CD4-positive, alpha-beta T cell (primary cell): ENCODE measurements at regions of chr16 and their contacts with region 1.

Region 1: DNA sequence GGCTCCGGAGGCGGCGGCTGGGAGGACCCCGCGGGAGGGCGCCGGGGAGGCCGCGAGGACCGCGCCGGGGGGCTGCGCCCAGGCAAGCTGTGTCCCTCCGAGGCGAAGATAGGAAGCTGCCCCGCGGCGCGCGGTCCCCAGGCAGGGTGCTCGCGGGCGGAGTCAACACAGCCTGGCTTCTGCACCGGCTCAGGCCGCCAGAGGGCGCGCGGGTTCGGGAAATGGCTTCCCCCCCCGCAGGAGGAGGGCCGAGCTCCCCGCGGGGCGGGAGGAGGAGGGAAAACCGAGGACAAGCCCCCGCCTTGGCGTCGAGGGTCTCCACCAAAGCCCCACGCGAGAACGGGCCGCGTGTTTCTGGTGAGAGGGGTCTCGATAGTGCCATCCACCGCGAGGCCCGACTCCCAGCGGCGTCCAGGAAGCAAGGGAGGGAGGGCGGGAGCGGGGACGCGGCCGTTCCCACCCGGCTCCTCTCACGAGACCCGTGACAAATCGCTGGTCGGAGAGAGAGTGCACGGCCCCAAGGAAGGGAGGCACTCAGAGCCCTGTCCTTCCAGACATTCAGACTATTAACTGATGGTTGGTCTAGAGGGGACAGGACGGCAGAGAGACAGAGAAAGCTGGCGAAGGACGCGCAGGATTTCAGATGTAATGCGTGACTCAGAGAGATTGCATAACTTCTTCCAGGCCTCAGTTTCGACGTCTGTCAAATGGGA is 64.4 kb upstream of the DNAJA2 start:
- DNase-seq: peak; percentile 76 to 94 (median 88)
- ATAC-seq: peak; percentile 97
- H3K4me3 ChIP-seq: peak overlapping the region; percentile 74
- H3K4me3 Mint-ChIP-seq: peak overlapping the region; percentile 67
- H3K27ac ChIP-seq: no peak overlapping the region
- H3K27ac Mint-ChIP-seq: no peak overlapping the region
- H3K4me1 ChIP-seq: peaks cover 13% of the 10 kb centered on the region
- H3K4me1 Mint-ChIP-seq: no peaks in the 10 kb centered on the region
- H3K27me3 ChIP-seq: no peaks in the 10 kb centered on the region
- H3K27me3 Mint-ChIP-seq: no peaks in the 10 kb centered on the region
- CTCF ChIP-seq: peak; percentile 93

Region 2: GRCh38 chr16:46689365-46690280 is 348.3 kb before region 1 on chr16 and contains the start of gene ORC6:
- CTCF ChIA-PET with region 1: no interaction called
- POLR2A ChIA-PET with region 1: no interaction called
- intact Hi-C with region 1: loop called in 1 of 2 experiments (anchors 5 kb)
- DNase-seq: peak; percentile 92 to 97 (median 96)
- ATAC-seq: peak; percentile 72
- H3K4me3 ChIP-seq: peak within 1 kb of the TSS; percentile 94
- H3K4me3 Mint-ChIP-seq: no peak within 1 kb of the TSS
- H3K27ac ChIP-seq: peak within 1 kb of the TSS; percentile 91 to 98
- H3K27ac Mint-ChIP-seq: no peak within 1 kb of the TSS
- H3K4me1 ChIP-seq: peaks cover 23% of the 10 kb centered on the region
- H3K4me1 Mint-ChIP-seq: peaks cover 33% of the 10 kb centered on the region
- H3K27me3 ChIP-seq: no peaks in the 10 kb centered on the region
- H3K27me3 Mint-ChIP-seq: no peaks in the 10 kb centered on the region
- CTCF ChIP-seq: no peak
- total RNA-seq, gene ORC6: 3.7 to 3.8 TPM

Region 3: DNA sequence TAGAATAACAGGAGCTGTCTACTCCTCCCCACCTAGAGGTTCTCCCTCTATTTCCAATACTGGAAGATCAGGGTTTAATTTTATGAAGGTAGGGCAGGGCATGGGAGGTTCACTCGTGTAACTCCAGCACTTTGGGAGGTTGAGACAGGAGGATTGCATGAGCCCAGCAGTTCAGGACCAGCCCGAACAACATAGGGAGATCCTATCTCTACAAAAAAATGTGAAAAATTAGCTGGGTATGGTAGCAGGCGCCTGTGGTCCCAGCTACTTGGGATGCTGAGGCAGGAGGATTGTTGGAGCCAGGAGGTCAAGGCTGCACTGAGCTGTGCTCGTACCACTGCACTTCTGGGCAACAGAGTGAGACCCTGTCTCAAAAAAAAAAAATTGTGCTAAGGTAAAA is 14.0 kb before region 1 on chr16:
- CTCF ChIA-PET with region 1: interaction called, 15 read pairs
- POLR2A ChIA-PET with region 1: no interaction called
- intact Hi-C with region 1: no loop called
- DNase-seq: no peak
- ATAC-seq: no peak
- H3K4me3 ChIP-seq: no peak overlapping the region
- H3K4me3 Mint-ChIP-seq: no peak overlapping the region
- H3K27ac ChIP-seq: no peak overlapping the region
- H3K27ac Mint-ChIP-seq: no peak overlapping the region
- H3K4me1 ChIP-seq: no peaks in the 10 kb centered on the region
- H3K4me1 Mint-ChIP-seq: no peaks in the 10 kb centered on the region
- H3K27me3 ChIP-seq: no peaks in the 10 kb centered on the region
- H3K27me3 Mint-ChIP-seq: no peaks in the 10 kb centered on the region
- CTCF ChIP-seq: no peak

Region 4: GRCh38 chr16:47460711-47461597 is 423.1 kb after region 1 on chr16 and contains the starts of genes ITFG1 and PHKB:
- CTCF ChIA-PET with region 1: interaction called, 6 read pairs
- POLR2A ChIA-PET with region 1: interaction called, 3 read pairs
- intact Hi-C with region 1: loop called in 1 of 2 experiments (anchors 5 kb)
- DNase-seq: peak; percentile 89 to 98 (median 94)
- ATAC-seq: peak; percentile 96
- H3K4me3 ChIP-seq: peak within 1 kb of the TSS; percentile 79
- H3K4me3 Mint-ChIP-seq: peak within 1 kb of the TSS; percentile 89
- H3K27ac ChIP-seq: peak within 1 kb of the TSS; percentile 87 to 93
- H3K27ac Mint-ChIP-seq: peak within 1 kb of the TSS; percentile 87
- H3K4me1 ChIP-seq: peaks cover 26% of the 10 kb centered on the region
- H3K4me1 Mint-ChIP-seq: peaks cover 70% of the 10 kb centered on the region
- H3K27me3 ChIP-seq: no peaks in the 10 kb centered on the region
- H3K27me3 Mint-ChIP-seq: no peaks in the 10 kb centered on the region
- CTCF ChIP-seq: no peak
- total RNA-seq, gene ITFG1: 18.0 to 18.5 TPM
- total RNA-seq, gene PHKB: 28.8 to 31.3 TPM

Region 5: DNA sequence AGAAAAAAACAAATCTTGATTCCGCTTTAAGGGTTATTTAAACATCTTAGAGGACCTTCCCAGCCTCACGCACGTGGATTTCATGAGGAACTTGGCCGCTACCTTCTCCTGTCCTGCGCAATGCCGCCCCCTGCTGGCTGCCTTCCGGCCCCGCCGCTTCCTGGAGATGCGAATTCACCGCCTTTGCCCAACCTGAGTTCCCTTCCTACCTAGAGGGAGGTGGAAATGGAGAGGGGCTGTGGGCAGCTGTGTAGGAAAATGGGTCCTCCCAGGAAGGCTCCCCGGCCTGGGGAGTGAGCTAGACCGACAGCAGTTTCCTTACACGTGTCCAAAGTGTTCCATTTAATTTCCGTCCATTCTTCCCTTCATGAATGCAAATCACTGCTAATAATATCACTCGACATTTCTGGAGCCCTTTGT is 1118.9 kb after region 1 on chr16:
- CTCF ChIA-PET with region 1: no interaction called
- POLR2A ChIA-PET with region 1: no interaction called
- intact Hi-C with region 1: loop called (anchors 2 kb)
- DNase-seq: peak; percentile 62 to 86 (median 76)
- ATAC-seq: peak; percentile 74
- H3K4me3 ChIP-seq: no peak overlapping the region
- H3K4me3 Mint-ChIP-seq: no peak overlapping the region
- H3K27ac ChIP-seq: no peak overlapping the region
- H3K27ac Mint-ChIP-seq: no peak overlapping the region
- H3K4me1 ChIP-seq: peaks cover 7% of the 10 kb centered on the region
- H3K4me1 Mint-ChIP-seq: no peaks in the 10 kb centered on the region
- H3K27me3 ChIP-seq: peaks cover 0 to 3% of the 10 kb centered on the region in 2 experiments
- H3K27me3 Mint-ChIP-seq: peaks cover 14% of the 10 kb centered on the region
- CTCF ChIP-seq: peak; percentile 94

Region 6: DNA sequence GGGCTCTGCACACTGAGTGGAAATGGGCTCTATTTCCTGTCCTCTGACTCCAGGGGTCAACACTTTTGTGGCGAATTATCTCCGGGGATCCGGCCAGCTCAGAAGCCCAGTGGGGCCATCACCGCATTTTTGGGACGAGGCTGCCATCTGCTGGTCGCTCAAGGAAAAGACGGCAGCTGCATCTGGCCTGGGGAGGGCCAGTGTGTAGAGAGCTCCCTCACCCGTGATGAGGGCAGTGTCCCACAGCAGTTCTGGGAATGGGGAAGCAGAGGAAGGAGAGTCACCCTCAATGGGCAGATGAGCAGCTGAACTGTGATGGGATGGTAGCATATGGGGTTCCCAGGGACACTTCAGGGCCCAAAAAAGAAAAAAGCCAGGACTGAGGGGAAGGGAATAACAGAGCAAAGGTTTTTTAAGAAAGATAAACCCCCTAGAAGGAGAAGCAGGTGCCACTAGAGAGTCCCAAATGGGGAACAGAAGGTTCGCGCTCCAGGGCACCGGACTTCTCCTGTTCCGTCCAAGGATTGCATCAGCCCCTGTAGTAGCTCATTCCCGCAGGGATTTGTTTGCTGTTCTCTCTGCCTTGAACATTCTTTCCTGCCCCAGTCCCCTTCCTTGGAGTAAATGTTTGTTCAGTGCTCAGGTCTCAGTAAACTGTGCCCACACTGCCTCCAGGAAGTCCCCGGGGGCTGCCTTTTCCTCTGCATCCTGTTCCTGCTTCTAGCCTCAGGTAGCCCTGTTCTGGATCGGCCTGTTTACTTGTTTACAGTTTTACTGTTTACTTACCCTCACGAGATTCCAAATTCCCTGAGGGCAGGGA is 1127.2 kb after region 1 on chr16:
- CTCF ChIA-PET with region 1: interaction called, 15 read pairs
- POLR2A ChIA-PET with region 1: interaction called, 4 read pairs
- intact Hi-C with region 1: loop called (anchors 2 kb)
- DNase-seq: peak; percentile 37 to 79 (median 57)
- ATAC-seq: peak; percentile 81
- H3K4me3 ChIP-seq: no peak overlapping the region
- H3K4me3 Mint-ChIP-seq: no peak overlapping the region
- H3K27ac ChIP-seq: no peak overlapping the region
- H3K27ac Mint-ChIP-seq: no peak overlapping the region
- H3K4me1 ChIP-seq: peaks cover 5% of the 10 kb centered on the region
- H3K4me1 Mint-ChIP-seq: peaks cover 5% of the 10 kb centered on the region
- H3K27me3 ChIP-seq: no peaks in the 10 kb centered on the region
- H3K27me3 Mint-ChIP-seq: no peaks in the 10 kb centered on the region
- CTCF ChIP-seq: peak; percentile 81